ENCODE measurements at regions of chr16 and their contacts with region 1.

Region 1: GRCh38 chr16:2911580-2912329 is at the start of gene FLYWCH1:
- DNase-seq: peak; percentile 99
- H3K4me3 ChIP-seq: peak within 1 kb of the TSS; percentile 85 to 94 (median 89)
- H3K27ac ChIP-seq: peak within 1 kb of the TSS; percentile 92 to 96 (median 94)
- H3K4me1 ChIP-seq: peaks cover 0 to 21% (median 14%) of the 10 kb centered on the region in 4 donors
- H3K27me3 ChIP-seq: no peaks in the 10 kb centered on the region
- CTCF ChIP-seq: no peak
- EP300 ChIP-seq: no peak
- POLR2A ChIP-seq: peak in 1 of 2 donors; percentile 42
- total RNA-seq, gene FLYWCH1: 28.6 to 51.5 (median 33.2) TPM

Region 2: DNA sequence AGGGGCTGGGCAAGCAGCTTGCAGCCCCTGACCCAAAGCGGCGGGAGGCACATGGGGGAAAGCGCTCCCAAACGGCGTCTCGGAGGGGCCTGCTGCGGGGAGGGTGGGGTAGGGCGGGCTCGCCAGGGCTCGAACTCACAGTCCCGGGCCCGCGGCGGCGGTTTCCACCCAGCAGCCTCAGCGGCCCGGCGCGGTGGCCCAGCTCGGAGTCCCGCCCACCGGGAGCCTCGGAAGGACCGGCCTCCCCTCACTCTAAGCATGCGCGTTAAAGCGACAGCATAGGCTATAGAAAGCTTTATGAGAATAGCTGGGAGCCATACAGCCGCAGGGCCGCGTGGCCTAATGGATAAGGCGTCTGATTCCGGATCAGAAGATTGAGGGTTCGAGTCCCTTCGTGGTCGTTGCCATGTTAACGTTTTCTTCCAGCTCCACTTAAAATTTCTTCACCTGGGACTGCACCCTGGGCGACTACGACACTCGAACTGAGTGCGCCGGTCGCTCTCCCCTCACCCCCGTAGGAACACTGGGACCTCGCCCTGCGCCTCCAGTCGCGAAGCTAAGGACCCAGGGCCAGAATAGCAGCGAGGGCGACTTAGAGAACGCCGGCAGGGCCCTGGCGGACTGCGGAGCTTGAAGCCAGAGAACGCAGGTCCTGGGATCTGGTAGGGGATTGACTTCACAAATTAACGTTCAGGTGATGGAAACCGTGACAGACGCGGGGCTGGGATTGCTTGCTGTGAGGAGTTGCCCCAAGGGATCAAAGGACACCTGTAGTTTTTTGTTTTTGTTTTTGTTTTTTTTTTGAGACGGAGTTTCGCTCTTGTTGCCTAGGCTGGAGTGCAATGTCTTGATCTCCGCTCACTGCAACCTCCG is 238.8 kb after region 1 on chr16:
- intact Hi-C with region 1: loop called (anchors 10 kb)
- DNase-seq: peak; percentile 97
- H3K4me3 ChIP-seq: peak overlapping the region; percentile 47 to 72 (median 66)
- H3K27ac ChIP-seq: peak overlapping the region; percentile 80 to 93 (median 88)
- H3K4me1 ChIP-seq: peaks cover 0 to 28% (median 24%) of the 10 kb centered on the region in 4 donors
- H3K27me3 ChIP-seq: no peaks in the 10 kb centered on the region
- CTCF ChIP-seq: no peak
- EP300 ChIP-seq: no peak
- POLR2A ChIP-seq: no peak

Measured in sigmoid colon (tissue), 7 donors.